Activated CD8-positive, alpha-beta T cell treated with anti-CD3 and anti-CD28 coated beads, Interleukin-2, amount 10 ng/mL, durations not matched to agents 7 days and 5 days (primary cell): ENCODE measurements at regions of chr6 and their contacts with region 1.

Region 1: GRCh38 chr6:14316635-14317386 is 199.2 kb downstream of the CD83 start:
- DNase-seq: peak; percentile 36
- ATAC-seq: peak; percentile 65
- H3K4me3 Mint-ChIP-seq: no peak overlapping the region
- H3K27ac Mint-ChIP-seq: peak overlapping the region; percentile 45
- H3K4me1 Mint-ChIP-seq: peaks cover 37% of the 10 kb centered on the region
- H3K27me3 Mint-ChIP-seq: no peaks in the 10 kb centered on the region

Region 2: GRCh38 chr6:14305624-14306023 is 11.2 kb before region 1 on chr6:
- CTCF ChIA-PET with region 1: interaction called, 13 read pairs
- POLR2A ChIA-PET with region 1: no interaction called
- DNase-seq: no peak
- ATAC-seq: no peak
- H3K4me3 Mint-ChIP-seq: no peak overlapping the region
- H3K27ac Mint-ChIP-seq: no peak overlapping the region
- H3K4me1 Mint-ChIP-seq: peaks cover 3% of the 10 kb centered on the region
- H3K27me3 Mint-ChIP-seq: peaks cover 12% of the 10 kb centered on the region

Region 3: GRCh38 chr6:14337152-14337551 is 20.3 kb after region 1 on chr6:
- CTCF ChIA-PET with region 1: interaction called, 11 read pairs
- POLR2A ChIA-PET with region 1: no interaction called
- DNase-seq: no peak
- ATAC-seq: no peak
- H3K4me3 Mint-ChIP-seq: no peak overlapping the region
- H3K27ac Mint-ChIP-seq: no peak overlapping the region
- H3K4me1 Mint-ChIP-seq: peaks cover 2% of the 10 kb centered on the region
- H3K27me3 Mint-ChIP-seq: peaks cover 4% of the 10 kb centered on the region